Calu3 (cell line): ENCODE measurements at regions of chr12 and their contacts with region 1.

Region 1: DNA sequence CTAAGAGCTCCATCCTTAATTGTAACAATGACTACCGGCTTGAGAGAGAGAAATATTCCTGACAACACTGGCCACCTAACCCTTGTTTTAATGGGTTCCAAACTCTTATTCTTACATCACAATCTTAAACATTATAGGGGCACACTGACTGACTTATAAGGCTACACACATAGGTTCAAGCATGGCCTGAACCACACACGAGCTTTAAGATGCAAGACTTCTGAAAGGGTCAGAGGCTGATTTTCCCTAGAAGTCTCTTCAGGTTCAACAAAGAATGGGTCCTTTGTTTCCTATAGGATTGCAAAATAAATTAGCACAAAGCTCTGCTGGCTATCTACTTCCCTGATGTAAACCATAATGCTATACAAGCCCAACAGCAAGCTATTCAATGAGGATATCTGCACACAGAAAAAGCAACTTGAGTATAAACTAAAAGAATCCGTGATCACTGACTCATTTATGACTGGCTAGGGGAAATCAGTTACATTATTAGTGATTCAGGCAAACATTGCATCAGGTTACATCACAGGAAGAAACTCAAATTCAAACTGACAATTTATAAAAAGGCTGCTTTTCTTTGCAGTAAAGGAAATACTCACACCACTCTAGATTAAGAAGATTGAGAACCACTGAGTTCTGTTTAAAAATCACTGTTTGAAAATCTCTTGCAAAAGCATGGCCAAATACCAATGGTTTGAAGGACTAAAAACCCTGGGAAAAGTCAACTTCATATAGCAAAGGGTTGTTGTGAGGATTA is 8.5 kb downstream of the BTG1 start:
- DNase-seq: peak; percentile 32
- H3K4me3 Mint-ChIP-seq: peak overlapping the region; percentile 87
- H3K27ac Mint-ChIP-seq: peak overlapping the region; percentile 99
- H3K4me1 Mint-ChIP-seq: peaks cover 61% of the 10 kb centered on the region
- H3K27me3 Mint-ChIP-seq: no peaks in the 10 kb centered on the region
- CTCF ChIP-seq: no peak

Region 2: DNA sequence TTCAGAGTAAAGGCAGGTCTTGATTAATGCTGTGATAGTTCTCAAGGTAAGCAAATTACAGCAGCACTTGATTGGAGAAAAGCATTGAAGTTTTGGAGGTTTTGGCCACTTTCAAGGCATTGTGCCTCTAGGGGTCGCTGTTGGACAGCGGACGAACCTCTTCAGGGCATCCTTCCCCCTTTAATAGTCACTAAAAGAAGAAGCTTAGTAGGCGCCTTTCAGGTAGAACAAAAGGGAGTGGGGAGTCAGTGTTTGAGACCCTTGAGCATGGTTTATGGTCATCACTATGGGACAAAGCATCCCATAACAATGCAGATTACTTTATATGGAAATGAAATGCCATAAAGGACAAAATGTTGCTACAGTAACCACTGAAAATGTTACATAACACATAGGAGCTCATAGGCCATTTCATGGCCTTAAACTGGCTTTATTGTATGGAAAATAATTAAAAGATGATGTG is 755.0 kb before region 1 on chr12:
- CTCF ChIA-PET with region 1: interaction called, 6 read pairs
- intact Hi-C with region 1: loop called (anchors 2 kb)
- DNase-seq: peak; percentile 89
- H3K4me3 Mint-ChIP-seq: peak overlapping the region; percentile 48
- H3K27ac Mint-ChIP-seq: peak overlapping the region; percentile 64
- H3K4me1 Mint-ChIP-seq: peaks cover 15% of the 10 kb centered on the region
- H3K27me3 Mint-ChIP-seq: no peaks in the 10 kb centered on the region
- CTCF ChIP-seq: peak; percentile 87

Region 3: GRCh38 chr12:91887948-91888347 is 249.2 kb before region 1 on chr12:
- CTCF ChIA-PET with region 1: no interaction called
- intact Hi-C with region 1: loop called (anchors 5 kb)
- DNase-seq: no peak
- H3K4me3 Mint-ChIP-seq: no peak overlapping the region
- H3K27ac Mint-ChIP-seq: no peak overlapping the region
- H3K4me1 Mint-ChIP-seq: peaks cover 40% of the 10 kb centered on the region
- H3K27me3 Mint-ChIP-seq: no peaks in the 10 kb centered on the region
- CTCF ChIP-seq: no peak

Region 4: GRCh38 chr12:92059976-92060375 is 77.2 kb before region 1 on chr12:
- CTCF ChIA-PET with region 1: interaction called, 7 read pairs
- intact Hi-C with region 1: loop called (anchors 5 kb)
- DNase-seq: no peak
- H3K4me3 Mint-ChIP-seq: no peak overlapping the region
- H3K27ac Mint-ChIP-seq: peak overlapping the region; percentile 35
- H3K4me1 Mint-ChIP-seq: peaks cover 61% of the 10 kb centered on the region
- H3K27me3 Mint-ChIP-seq: no peaks in the 10 kb centered on the region
- CTCF ChIP-seq: no peak

Region 5: DNA sequence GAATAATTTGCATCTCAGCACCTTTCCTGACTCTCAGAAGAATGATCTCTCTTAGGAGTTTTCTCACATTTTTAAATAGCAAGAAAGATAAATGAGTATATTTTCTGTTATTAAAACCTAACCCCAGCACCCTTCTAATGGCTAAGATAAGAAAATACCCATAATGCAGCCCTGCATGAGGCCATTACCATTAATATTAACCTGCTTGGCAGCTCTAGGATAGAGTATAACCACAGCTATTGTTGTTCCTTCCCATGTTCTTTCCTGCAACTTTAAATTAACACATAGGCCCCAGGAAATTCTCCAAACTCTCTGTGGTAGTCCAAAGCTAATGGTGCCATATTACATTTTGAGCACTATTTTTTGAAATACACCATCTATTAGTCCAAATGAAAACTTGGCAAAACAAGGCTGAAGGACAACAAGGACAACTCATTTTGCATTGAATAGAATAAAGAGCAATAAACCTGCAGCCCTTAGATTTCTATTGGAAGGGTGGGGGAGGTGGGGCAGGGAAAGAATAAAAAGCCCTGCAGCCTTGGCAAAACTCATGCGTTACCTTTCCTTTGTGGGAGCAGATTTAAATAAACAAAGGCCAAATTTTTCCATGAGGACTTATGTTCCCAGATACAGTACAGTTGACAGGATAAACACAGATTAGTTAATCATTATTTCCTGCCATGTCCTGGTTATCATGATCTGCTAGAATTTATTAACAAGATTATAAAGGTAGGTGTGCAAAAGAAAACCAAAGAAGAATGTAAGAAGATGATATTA is 38.4 kb before region 1 on chr12:
- CTCF ChIA-PET with region 1: interaction called, 4 read pairs
- intact Hi-C with region 1: loop called (anchors 2 kb)
- DNase-seq: no peak
- H3K4me3 Mint-ChIP-seq: no peak overlapping the region
- H3K27ac Mint-ChIP-seq: peak overlapping the region; percentile 8
- H3K4me1 Mint-ChIP-seq: peaks cover 65% of the 10 kb centered on the region
- H3K27me3 Mint-ChIP-seq: no peaks in the 10 kb centered on the region
- CTCF ChIP-seq: no peak

Region 6: GRCh38 chr12:92639017-92639416 is 501.9 kb after region 1 on chr12:
- CTCF ChIA-PET with region 1: no interaction called
- intact Hi-C with region 1: no loop called
- DNase-seq: no peak
- H3K4me3 Mint-ChIP-seq: no peak overlapping the region
- H3K27ac Mint-ChIP-seq: no peak overlapping the region
- H3K4me1 Mint-ChIP-seq: no peaks in the 10 kb centered on the region
- H3K27me3 Mint-ChIP-seq: no peaks in the 10 kb centered on the region
- CTCF ChIP-seq: no peak